Activated CD4-positive, alpha-beta T cell treated with anti-CD3 and anti-CD28 coated beads, Interleukin-2, amount 10 ng/mL, durations not matched to agents 7 days and 5 days (primary cell): ENCODE measurements at regions of chr20 and their contacts with region 1.

Region 1: GRCh38 chr20:45998761-45999160 is 9.9 kb upstream of the MMP9 start:
- DNase-seq: no peak
- H3K4me3 Mint-ChIP-seq: no peak overlapping the region
- H3K27ac Mint-ChIP-seq: no peak overlapping the region
- H3K4me1 Mint-ChIP-seq: peaks cover 54% of the 10 kb centered on the region
- H3K27me3 Mint-ChIP-seq: peaks cover 9% of the 10 kb centered on the region

Region 2: GRCh38 chr20:45959956-45960630 is 38.7 kb before region 1 on chr20:
- CTCF ChIA-PET with region 1: no interaction called
- POLR2A ChIA-PET with region 1: no interaction called
- DNase-seq: no peak
- H3K4me3 Mint-ChIP-seq: no peak overlapping the region
- H3K27ac Mint-ChIP-seq: no peak overlapping the region
- H3K4me1 Mint-ChIP-seq: peaks cover 2% of the 10 kb centered on the region
- H3K27me3 Mint-ChIP-seq: no peaks in the 10 kb centered on the region

Region 3: GRCh38 chr20:46013826-46014516 is 15.2 kb after region 1 on chr20:
- CTCF ChIA-PET with region 1: interaction called, 11 read pairs
- POLR2A ChIA-PET with region 1: no interaction called
- DNase-seq: peak; percentile 66
- H3K4me3 Mint-ChIP-seq: no peak overlapping the region
- H3K27ac Mint-ChIP-seq: no peak overlapping the region
- H3K4me1 Mint-ChIP-seq: peaks cover 45% of the 10 kb centered on the region
- H3K27me3 Mint-ChIP-seq: peaks cover 63% of the 10 kb centered on the region